ENCODE measurements at regions of chr19 and their contacts with region 1.

Region 1: GRCh38 chr19:6199240-6199983 is 63.9 kb downstream of the ACSBG2 start:
- DNase-seq: peak; percentile 100

Region 2: DNA sequence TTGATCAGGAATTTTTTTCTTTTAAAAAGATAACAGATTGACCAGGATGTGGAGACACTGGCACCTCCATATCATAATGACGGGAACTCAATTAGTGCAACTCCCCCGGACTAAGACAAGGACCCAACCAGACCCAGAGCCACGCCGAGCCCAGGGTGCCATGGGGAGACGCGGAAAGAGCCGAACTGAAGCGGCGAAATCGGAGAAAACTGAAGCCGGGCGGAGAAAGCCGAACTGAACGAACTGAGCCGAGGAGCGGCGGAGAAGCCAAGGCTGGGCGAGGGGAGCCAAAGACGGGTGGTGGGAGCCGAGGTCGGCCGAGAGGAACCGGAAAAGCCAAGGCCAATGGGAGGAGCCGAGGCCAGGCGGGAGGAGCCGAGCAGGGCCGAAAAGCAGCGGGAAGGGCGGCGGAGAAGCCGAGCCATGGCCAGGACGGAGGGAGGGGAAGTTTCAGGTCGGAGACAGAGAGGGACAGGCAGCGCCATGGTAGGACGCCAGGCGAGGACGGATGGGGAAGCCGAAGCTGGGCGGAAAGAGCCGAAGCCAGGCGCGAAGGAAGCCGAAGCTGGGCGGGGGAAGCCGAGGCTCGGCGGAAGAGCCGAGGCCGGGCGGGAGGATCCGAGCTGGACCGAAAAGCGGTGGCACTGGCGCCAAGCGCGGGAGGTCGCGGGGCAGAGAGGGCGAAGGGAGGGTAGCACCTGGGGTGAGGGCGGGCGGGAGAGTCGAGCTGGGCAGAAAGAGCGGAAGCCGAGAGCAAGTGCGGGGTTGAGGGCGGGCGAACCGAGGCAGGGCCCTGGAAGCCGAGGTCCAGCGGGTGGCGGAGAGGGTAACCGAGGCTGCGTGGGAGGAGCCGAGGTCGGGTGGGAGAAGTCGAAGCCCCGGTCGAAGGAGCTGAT is 899.5 kb after region 1 on chr19:
- intact Hi-C with region 1: loop called in 1 of 2 experiments (anchors 5 kb)
- DNase-seq: peak; percentile 98

Measured in posterior vena cava (tissue), 2 donors.